Activated T-helper 1 cell treated with anti-CD3 and anti-CD28 coated beads, Interleukin-12 subunit alpha, Interleukin-12 subunit beta, Interleukin-2, Interleukin-4 antibody, amounts not matched to agents 30 ng/mL and 10 ng/mL and 1 ng/mL, durations not matched to agents 14 hours and 24 hours and 36 hours (primary cell): ENCODE measurements at regions of chr15 and their contacts with region 1.

Region 1: GRCh38 chr15:38699633-38700230 is 135.1 kb upstream of the RASGRP1 start:
- DNase-seq: peak; percentile 63
- H3K4me3 Mint-ChIP-seq: peak overlapping the region; percentile 43
- H3K27ac Mint-ChIP-seq: peak overlapping the region; percentile 76
- H3K4me1 Mint-ChIP-seq: peaks cover 70% of the 10 kb centered on the region
- H3K27me3 Mint-ChIP-seq: no peaks in the 10 kb centered on the region

Region 2: GRCh38 chr15:38440353-38441129 is 259.2 kb before region 1 on chr15:
- intact Hi-C with region 1: loop called (anchors 1 kb)
- DNase-seq: peak; percentile 38
- H3K4me3 Mint-ChIP-seq: no peak overlapping the region
- H3K27ac Mint-ChIP-seq: peak overlapping the region; percentile 56
- H3K4me1 Mint-ChIP-seq: peaks cover 18% of the 10 kb centered on the region
- H3K27me3 Mint-ChIP-seq: peaks cover 50% of the 10 kb centered on the region

Region 3: DNA sequence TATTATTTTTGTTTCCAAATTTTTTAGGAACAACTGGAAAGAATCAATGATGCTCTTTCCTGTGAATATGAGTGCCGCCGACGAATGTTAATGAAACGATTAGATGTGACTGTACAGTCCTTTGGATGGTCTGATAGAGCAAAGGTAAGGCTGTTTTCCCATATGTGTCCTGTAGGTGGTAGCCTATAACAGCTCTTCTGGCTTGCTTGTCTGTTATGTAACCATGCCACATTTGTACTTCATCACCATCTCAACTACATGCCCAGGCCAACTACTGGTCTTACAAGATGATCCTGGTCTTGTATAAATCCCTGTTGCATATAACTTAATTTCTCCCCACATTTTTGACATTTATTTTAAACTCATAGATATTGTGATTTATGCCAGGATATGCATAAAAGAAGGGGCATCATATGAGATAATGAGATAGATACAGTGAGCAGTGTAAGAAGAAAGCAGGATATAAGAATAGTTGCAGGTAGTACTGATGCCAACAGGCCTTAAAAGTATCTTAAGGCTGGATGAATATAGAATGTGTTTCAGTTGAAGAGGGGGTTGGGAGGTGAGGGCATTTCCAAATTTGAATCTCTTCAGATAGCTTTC is 225.5 kb before region 1 on chr15:
- intact Hi-C with region 1: loop called (anchors 1 kb)
- DNase-seq: peak; percentile 29
- H3K4me3 Mint-ChIP-seq: no peak overlapping the region
- H3K27ac Mint-ChIP-seq: peak overlapping the region; percentile 41
- H3K4me1 Mint-ChIP-seq: peaks cover 20% of the 10 kb centered on the region
- H3K27me3 Mint-ChIP-seq: no peaks in the 10 kb centered on the region

Region 4: GRCh38 chr15:38683382-38684242 is 16.1 kb before region 1 on chr15:
- intact Hi-C with region 1: loop called (anchors 1 kb)
- DNase-seq: peak; percentile 57
- H3K4me3 Mint-ChIP-seq: peak overlapping the region; percentile 65
- H3K27ac Mint-ChIP-seq: peak overlapping the region; percentile 95
- H3K4me1 Mint-ChIP-seq: peaks cover 80% of the 10 kb centered on the region
- H3K27me3 Mint-ChIP-seq: no peaks in the 10 kb centered on the region

Region 5: DNA sequence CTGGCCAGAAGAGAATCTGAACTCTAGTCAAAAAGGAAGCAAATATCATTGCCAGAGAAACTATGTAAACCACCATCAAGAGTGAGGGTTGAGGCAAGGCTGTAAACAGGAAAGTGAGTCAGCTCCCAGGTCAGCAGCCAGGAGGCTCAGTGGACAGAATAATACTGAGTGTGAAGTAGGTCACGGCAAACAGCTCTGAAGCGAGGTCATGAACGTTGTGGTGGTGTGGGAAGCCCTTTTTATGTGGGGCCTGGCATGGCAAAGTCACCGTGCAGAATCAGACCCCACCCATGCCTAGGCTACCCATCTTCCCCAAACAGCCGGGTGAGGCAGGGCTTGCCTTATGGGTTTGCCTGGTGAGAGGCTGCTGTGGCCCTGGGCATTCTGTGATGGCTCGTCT is 925.1 kb after region 1 on chr15:
- intact Hi-C with region 1: loop called (anchors 5 kb)
- DNase-seq: peak; percentile 65
- H3K4me3 Mint-ChIP-seq: peak overlapping the region; percentile 71
- H3K27ac Mint-ChIP-seq: peak overlapping the region; percentile 98
- H3K4me1 Mint-ChIP-seq: peaks cover 81% of the 10 kb centered on the region
- H3K27me3 Mint-ChIP-seq: no peaks in the 10 kb centered on the region